A549 (cell line): ENCODE measurements at regions of chr9 and their contacts with region 1.

Region 1: DNA sequence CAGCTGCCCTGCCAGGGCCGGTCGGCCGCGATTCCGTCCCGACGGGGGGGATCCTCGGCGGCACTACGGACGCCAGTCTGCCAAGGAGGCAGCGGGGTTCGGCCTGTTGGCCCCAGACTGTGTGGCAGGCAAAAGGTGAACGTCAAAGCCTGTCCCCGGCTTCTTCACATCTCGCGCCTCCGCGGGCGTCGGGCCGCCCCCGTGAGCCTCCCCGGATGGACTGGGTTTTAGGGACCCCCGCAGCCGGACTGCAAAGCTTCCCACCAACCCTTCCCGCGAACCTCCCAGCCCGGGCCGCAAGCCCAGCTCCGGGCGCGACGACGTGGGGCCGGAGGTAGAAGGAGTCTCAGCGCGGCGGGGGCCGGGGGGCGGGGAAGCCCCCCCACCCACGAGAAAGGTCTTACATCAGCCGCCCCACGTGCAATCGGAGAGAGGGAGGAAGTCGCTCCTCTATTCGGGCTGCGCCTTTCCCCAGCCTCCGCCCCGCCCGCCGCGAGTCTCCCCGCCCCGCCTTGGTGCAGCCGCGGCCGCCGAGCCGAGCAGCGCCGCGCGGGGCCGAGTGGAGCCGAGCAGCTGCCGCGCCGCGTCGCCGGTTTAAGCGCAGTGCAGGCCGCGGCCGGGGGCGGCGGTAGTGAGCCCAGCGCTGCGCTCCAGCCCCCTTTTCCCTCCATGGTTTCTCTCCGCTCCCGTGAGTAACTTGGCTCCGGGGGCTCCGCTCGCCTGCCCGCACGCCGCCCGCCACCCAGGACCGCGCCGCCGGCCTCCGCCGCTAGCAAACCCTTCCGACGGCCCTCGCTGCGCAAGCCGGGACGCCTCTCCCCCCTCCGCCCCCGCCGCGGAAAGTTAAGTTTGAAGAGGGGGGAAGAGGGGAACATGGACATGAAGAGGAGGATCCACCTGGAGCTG is at the start of gene ANP32B:
- DNase-seq: peak; percentile 72 to 90
- ATAC-seq: peak; percentile 73 to 93
- H3K4me3 ChIP-seq: peak within 1 kb of the TSS; percentile 86
- H3K27ac ChIP-seq: peak within 1 kb of the TSS; percentile 99
- H3K4me1 ChIP-seq: peaks cover 37% of the 10 kb centered on the region
- CTCF ChIP-seq: peak; percentile 70
- EP300 ChIP-seq: no peak
- POLR2A ChIP-seq: peak; percentile 58
- RAD21 ChIP-seq: 0 out of 5 replicates have a peak, but pooled peaks of 1 of the 2 experiments have one; percentile 18
- polyA plus RNA-seq, gene ANP32B: 97.0 and 127 TPM in 2 replicates

Region 2: DNA sequence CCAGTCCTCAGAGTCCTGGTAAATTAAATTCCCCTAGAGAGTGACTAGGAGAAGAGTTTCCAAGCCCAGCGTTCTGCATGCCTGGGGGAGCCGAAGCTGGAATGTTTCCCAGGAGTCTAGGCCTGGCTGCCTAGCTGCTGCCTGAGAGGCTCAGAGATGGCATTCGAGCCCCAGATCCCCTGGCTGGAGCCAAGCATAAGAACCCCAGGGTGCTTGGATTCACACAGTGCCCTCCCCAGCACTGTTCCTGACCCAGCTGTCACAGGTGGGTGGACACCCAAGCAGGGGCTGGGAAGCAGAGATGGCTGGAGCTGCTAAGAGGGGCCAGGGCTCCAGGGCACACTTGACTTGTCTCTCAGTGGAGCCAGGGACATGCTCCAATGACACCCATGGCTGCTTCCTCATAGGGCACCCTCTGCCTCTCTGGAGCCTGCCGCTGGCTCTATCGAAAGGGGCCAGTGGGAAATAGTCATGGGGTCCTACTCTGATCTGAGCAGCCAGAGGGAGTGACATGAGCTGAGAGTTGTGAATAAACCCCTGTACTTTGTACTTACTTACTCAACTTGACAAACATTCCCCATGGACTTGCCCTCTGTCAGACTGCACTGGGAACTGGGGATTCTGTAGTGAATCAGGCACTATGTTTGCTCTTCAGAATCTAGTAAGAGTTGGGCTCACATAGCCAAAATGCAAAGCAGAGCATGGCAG is 223.2 kb before region 1 on chr9:
- CTCF ChIA-PET with region 1: no interaction called
- POLR2A ChIA-PET with region 1: no interaction called
- DNase-seq: peak; percentile 11 to 70
- ATAC-seq: peak; percentile 82 to 92
- H3K4me3 ChIP-seq: no peak overlapping the region
- H3K27ac ChIP-seq: peak overlapping the region; percentile 69 to 77
- H3K4me1 ChIP-seq: peaks cover 22% of the 10 kb centered on the region
- CTCF ChIP-seq: no peak
- EP300 ChIP-seq: no peak
- POLR2A ChIP-seq: no peak
- RAD21 ChIP-seq: no peak

Region 3: DNA sequence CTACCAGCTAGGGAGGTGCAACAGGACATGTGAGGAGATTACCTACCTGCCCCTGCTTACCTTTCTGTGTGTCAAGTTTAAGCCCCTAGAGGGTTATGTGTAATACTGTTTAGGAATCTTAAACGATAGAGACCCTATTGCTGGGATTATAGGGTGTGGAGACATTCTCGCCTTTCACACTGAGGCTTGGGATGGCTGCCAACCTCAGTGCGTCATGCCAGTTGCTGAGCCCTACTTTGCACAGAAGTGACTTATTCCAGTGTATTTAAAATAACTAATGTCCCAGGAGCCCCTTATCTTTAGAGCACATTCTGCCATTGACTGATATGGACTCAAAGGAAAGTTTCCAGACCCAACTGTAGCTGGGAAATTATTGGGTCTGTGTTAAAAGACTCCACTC is 209.2 kb before region 1 on chr9:
- CTCF ChIA-PET with region 1: no interaction called
- POLR2A ChIA-PET with region 1: no interaction called
- DNase-seq: no peak
- ATAC-seq: no peak
- H3K4me3 ChIP-seq: no peak overlapping the region
- H3K27ac ChIP-seq: no peak overlapping the region
- H3K4me1 ChIP-seq: no peaks in the 10 kb centered on the region
- CTCF ChIP-seq: no peak
- EP300 ChIP-seq: no peak
- POLR2A ChIP-seq: no peak
- RAD21 ChIP-seq: no peak

Region 4: GRCh38 chr9:97911970-97912369 is 71.0 kb before region 1 on chr9:
- CTCF ChIA-PET with region 1: no interaction called
- POLR2A ChIA-PET with region 1: no interaction called
- DNase-seq: no peak
- ATAC-seq: no peak
- H3K4me3 ChIP-seq: no peak overlapping the region
- H3K27ac ChIP-seq: no peak overlapping the region
- H3K4me1 ChIP-seq: no peaks in the 10 kb centered on the region
- CTCF ChIP-seq: no peak
- EP300 ChIP-seq: no peak
- POLR2A ChIP-seq: no peak
- RAD21 ChIP-seq: no peak

Region 5: DNA sequence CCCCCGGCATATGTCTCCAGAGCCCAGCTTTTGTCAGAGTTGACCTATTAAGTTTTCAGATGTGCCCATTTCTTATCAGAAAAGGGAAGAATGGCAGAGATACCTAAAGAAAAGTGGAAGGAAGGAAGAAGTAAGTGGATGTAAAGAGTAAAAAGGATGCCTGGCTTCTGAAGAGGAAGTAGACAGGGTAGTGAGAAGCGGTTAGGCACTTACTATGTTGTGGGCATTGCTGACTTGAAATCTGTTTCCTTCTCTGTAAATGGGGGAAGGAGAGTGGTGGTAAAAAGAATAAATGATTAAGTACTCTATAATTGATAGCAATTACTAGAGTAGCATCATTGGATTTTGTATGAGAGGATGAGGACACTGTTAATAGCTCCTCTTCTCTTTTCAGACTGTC is 10.1 kb after region 1 on chr9:
- CTCF ChIA-PET with region 1: interaction called, 12 read pairs
- POLR2A ChIA-PET with region 1: interaction called, 4 read pairs
- DNase-seq: no peak
- ATAC-seq: no peak
- H3K4me3 ChIP-seq: no peak overlapping the region
- H3K27ac ChIP-seq: no peak overlapping the region
- H3K4me1 ChIP-seq: peaks cover 60% of the 10 kb centered on the region
- CTCF ChIP-seq: no peak
- EP300 ChIP-seq: no peak
- POLR2A ChIP-seq: no peak
- RAD21 ChIP-seq: no peak